ENCODE measurements at regions of chr2 and their contacts with region 1.

Region 1: GRCh38 chr2:96116879-96117697 is 717 bp upstream of the ADRA2B start:
- DNase-seq: peak; percentile 48 to 85 (median 60)
- ATAC-seq: peak; percentile 41 to 91 (median 72)
- H3K4me3 ChIP-seq: peak overlapping the region; percentile 52 to 76 (median 64)
- H3K27ac ChIP-seq: peak overlapping the region in 11 of 12 donors; percentile 57 to 82 (median 67)
- H3K4me1 ChIP-seq: peaks cover 0 to 24% (median 10%) of the 10 kb centered on the region in 12 donors
- H3K27me3 ChIP-seq: peaks cover 0 to 40% (median 16%) of the 10 kb centered on the region in 9 donors
- CTCF ChIP-seq: peak; percentile 29 to 97 (median 90)
- POLR2A ChIP-seq: peak in 1 of 2 donors; percentile 9

Region 2: DNA sequence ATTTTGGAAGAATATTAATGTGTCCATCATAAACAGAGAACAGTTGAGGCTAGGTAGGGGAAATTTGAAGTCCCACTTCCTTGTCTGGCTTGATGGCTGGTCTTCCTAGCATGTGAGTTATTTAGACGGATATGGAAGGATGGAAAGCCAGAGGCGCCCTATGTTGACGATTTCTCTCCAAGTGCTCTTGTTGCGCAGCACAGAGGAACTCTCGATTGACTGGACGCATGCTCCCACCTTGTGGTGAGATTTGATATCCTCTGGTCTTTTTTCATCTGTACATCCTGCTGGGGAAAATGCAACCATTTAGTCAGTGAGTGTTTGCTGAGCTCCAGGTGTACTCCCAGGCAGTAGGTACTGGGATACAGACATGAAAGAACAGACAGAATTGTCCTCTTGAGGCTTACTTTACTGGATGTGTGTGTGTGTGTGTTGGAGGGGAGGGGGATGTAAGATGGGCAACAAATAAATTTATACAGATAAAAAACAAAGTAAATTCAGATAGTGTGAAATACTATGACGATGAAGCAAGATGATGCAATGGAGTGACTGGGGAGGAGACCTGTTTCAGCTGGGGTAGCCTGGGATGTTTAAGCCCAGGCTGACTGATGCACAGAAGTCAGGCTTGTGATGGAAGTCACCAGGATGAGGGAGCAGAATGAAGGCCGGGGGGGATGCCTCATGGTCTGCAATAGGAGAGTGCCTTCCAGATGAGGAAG is 388.1 kb before region 1 on chr2:
- intact Hi-C with region 1: no loop called
- DNase-seq: peak in 4 of 5 donors; percentile 55 to 66 (median 62)
- ATAC-seq: peak; percentile 87 to 96 (median 93)
- H3K4me3 ChIP-seq: no peak overlapping the region
- H3K27ac ChIP-seq: no peak overlapping the region
- H3K4me1 ChIP-seq: no peaks in the 10 kb centered on the region
- H3K27me3 ChIP-seq: peaks cover 0 to 7% (median 0%) of the 10 kb centered on the region in 9 donors
- CTCF ChIP-seq: peak; percentile 44 to 76 (median 71)
- POLR2A ChIP-seq: no peak

Region 3: GRCh38 chr2:96024336-96025193 is 92.5 kb before region 1 on chr2:
- intact Hi-C with region 1: loop called in 2 of 10 experiments (anchors 10 kb)
- DNase-seq: no peak
- ATAC-seq: no peak
- H3K4me3 ChIP-seq: peak overlapping the region in 2 of 12 donors; percentile 9 to 22
- H3K27ac ChIP-seq: peak overlapping the region in 1 of 12 donors; percentile 33
- H3K4me1 ChIP-seq: peaks cover 0 to 6% (median 0%) of the 10 kb centered on the region in 12 donors
- H3K27me3 ChIP-seq: no peaks in the 10 kb centered on the region
- CTCF ChIP-seq: no peak
- POLR2A ChIP-seq: no peak

Region 4: GRCh38 chr2:96065381-96065930 is 51.6 kb before region 1 on chr2:
- intact Hi-C with region 1: loop called in 7 of 10 experiments (anchors 2 to 5 kb)
- DNase-seq: no peak
- ATAC-seq: no peak
- H3K4me3 ChIP-seq: no peak overlapping the region
- H3K27ac ChIP-seq: no peak overlapping the region
- H3K4me1 ChIP-seq: peaks cover 0 to 5% (median 0%) of the 10 kb centered on the region in 12 donors
- H3K27me3 ChIP-seq: no peaks in the 10 kb centered on the region
- CTCF ChIP-seq: no peak
- POLR2A ChIP-seq: no peak

Region 5: GRCh38 chr2:96072746-96073145 is 44.3 kb before region 1 on chr2:
- intact Hi-C with region 1: loop called in 8 of 10 experiments (anchors 2 to 5 kb)
- DNase-seq: no peak
- ATAC-seq: no peak
- H3K4me3 ChIP-seq: no peak overlapping the region
- H3K27ac ChIP-seq: no peak overlapping the region
- H3K4me1 ChIP-seq: peaks cover 0 to 12% (median 0%) of the 10 kb centered on the region in 12 donors
- H3K27me3 ChIP-seq: no peaks in the 10 kb centered on the region
- CTCF ChIP-seq: no peak
- POLR2A ChIP-seq: no peak

Region 6: DNA sequence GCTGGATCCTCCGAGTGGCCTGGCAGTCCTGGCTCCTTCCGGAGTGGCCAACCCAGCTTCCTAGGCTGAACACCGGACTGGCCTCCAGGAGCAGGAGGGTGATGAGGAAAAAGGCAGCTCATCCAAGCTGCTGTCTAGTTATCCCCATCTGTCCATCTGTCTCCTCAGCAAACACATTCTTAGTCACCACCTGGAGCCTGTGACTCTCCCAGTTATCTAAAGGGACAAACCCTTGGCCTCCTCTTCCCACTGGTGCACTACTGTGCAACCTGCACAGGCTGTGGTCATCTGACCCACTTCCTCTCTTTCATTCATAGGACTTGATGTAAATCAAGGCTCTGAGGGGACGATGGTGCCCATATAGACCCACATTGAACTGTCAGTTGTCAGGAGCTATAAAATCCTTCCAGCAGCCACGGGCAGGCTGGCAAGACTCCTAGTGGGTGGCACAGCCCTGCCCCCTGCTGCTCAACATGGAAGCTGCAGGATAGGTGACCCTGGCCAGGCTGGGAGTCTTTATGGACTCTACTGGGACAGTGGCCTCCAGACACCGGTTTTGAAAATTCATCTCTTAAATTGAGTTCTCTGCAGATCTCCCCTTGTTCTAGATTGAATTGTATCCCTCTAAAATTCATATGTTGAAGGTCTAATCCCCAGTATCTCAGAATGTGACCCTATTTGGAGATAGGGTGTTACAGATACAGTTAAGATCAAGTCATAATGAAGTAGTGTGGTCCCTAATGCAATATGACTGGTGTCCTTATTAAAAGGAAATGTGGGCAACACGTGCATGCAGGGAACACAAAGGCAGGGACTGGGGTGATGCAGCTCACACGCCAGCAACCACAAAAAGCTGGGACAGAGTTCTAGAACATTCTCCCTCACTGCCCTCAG is 57.4 kb after region 1 on chr2:
- intact Hi-C with region 1: loop called in 2 of 10 experiments (anchors 5 to 10 kb)
- DNase-seq: peak; percentile 68 to 82 (median 78)
- ATAC-seq: peak; percentile 59 to 82 (median 76)
- H3K4me3 ChIP-seq: no peak overlapping the region
- H3K27ac ChIP-seq: no peak overlapping the region
- H3K4me1 ChIP-seq: peaks cover 0 to 16% (median 5%) of the 10 kb centered on the region in 12 donors
- H3K27me3 ChIP-seq: no peaks in the 10 kb centered on the region
- CTCF ChIP-seq: peak; percentile 85 to 96 (median 90)
- POLR2A ChIP-seq: no peak

Measured in heart left ventricle (tissue), 16 donors.